ENCODE measurements at regions of chr6 and their contacts with region 1.

Region 1: GRCh38 chr6:4727671-4728435 is 48.4 kb upstream of the CDYL start:
- DNase-seq: no peak
- H3K4me3 Mint-ChIP-seq: no peak overlapping the region
- H3K27ac Mint-ChIP-seq: no peak overlapping the region
- H3K4me1 Mint-ChIP-seq: peaks cover 10% of the 10 kb centered on the region
- H3K27me3 Mint-ChIP-seq: peaks cover 10% of the 10 kb centered on the region

Region 2: GRCh38 chr6:4180652-4181255 is 547.1 kb before region 1 on chr6:
- intact Hi-C with region 1: no loop called
- DNase-seq: no peak
- H3K4me3 Mint-ChIP-seq: no peak overlapping the region
- H3K27ac Mint-ChIP-seq: no peak overlapping the region
- H3K4me1 Mint-ChIP-seq: peaks cover 11% of the 10 kb centered on the region
- H3K27me3 Mint-ChIP-seq: peaks cover 4% of the 10 kb centered on the region

Region 3: GRCh38 chr6:4637691-4638433 is 90.0 kb before region 1 on chr6:
- intact Hi-C with region 1: loop called (anchors 5 kb)
- DNase-seq: no peak
- H3K4me3 Mint-ChIP-seq: no peak overlapping the region
- H3K27ac Mint-ChIP-seq: peak overlapping the region; percentile 73
- H3K4me1 Mint-ChIP-seq: peaks cover 21% of the 10 kb centered on the region
- H3K27me3 Mint-ChIP-seq: no peaks in the 10 kb centered on the region

Measured in activated T-helper 2 cell treated with anti-CD3 and anti-CD28 coated beads, Interferon-gamma antibody, Interleukin-2, Interleukin-4, amounts not matched to agents 10 μg/mL and 5 μg/mL and 100 μg/mL, durations not matched to agents 14 hours and 24 hours and 36 hours (primary cell).